ENCODE measurements at regions of chr7 and their contacts with region 1.

Region 1: DNA sequence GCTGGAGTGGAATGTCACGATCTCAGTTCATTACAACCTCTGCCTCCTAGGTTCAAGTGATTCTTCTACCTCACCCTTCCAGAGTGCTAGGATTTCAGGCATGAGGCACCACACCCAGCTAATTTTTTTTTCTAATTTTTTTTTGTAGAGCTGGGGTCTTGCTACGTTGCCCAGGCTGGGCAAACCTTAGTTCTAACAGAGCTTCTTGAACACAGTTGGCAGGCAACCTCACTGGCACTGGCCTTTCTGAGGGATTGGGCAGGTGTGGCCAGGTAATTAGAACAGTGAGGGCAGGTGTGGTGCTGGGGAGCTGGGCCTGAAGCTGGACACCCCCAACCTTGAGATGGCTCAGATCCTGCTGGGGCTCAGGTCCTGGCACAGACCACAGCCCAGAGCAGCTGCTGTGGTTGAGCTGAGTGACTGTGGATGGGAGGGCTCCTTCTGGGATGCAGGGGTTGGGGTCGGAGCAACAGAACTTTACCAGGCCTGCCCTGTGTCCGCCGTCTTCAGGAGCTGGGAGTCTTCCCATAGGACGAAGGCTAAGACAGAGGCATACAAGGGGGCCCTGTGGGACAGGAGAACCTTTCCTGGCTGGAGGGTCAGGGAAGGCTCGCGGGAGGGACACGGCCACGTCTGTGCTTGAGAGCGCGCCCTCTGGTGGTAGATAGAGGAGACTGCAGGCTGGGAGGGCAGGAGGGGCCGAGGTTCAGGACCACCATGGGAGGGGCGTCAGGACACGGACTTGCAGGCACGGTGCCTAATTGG is 48.2 kb downstream of the COL26A1 start:
- DNase-seq: peak; percentile 94
- H3K4me3 ChIP-seq: peak overlapping the region in 1 of 2 experiments; percentile 30; a peak in 1 of 4 replicates
- H3K27ac ChIP-seq: no peak overlapping the region
- H3K4me1 ChIP-seq: peaks cover 0 to 4% of the 10 kb centered on the region in 2 experiments; a peak in 1 of 4 replicates
- H3K27me3 ChIP-seq: peaks cover 10% of the 10 kb centered on the region; the same call in 1 of the 2 replicates
- CTCF ChIP-seq: peak; percentile 88
- EP300 ChIP-seq: no peak
- RAD21 ChIP-seq: peak; percentile 83

Region 2: GRCh38 chr7:101321491-101322401 is 89.2 kb before region 1 on chr7 and contains the start of gene IFT22:
- CTCF ChIA-PET with region 1: interaction called, 33 read pairs
- POLR2A ChIA-PET with region 1: interaction called, 11 read pairs
- DNase-seq: peak; percentile 99
- H3K4me3 ChIP-seq: peak within 1 kb of the TSS; percentile 61 to 78
- H3K27ac ChIP-seq: peak within 1 kb of the TSS; percentile 59 to 81
- H3K4me1 ChIP-seq: peaks cover 0 to 2% of the 10 kb centered on the region in 2 experiments; a peak in 2 of 4 replicates
- H3K27me3 ChIP-seq: no peaks in the 10 kb centered on the region
- CTCF ChIP-seq: peak; percentile 57
- EP300 ChIP-seq: no peak; a peak in 1 of 4 replicates
- RAD21 ChIP-seq: peak; percentile 72
- polyA plus RNA-seq, gene IFT22: 62.4 and 66.7 TPM in 2 replicates

Region 3: GRCh38 chr7:101363734-101364374 is 47.1 kb before region 1 on chr7:
- CTCF ChIA-PET with region 1: interaction called, 95 read pairs
- POLR2A ChIA-PET with region 1: interaction called, 3 read pairs
- DNase-seq: peak; percentile 98
- H3K4me3 ChIP-seq: peak overlapping the region; percentile 56 to 70
- H3K27ac ChIP-seq: peak overlapping the region in 1 of 2 experiments; percentile 9; a peak in 1 of 4 replicates
- H3K4me1 ChIP-seq: peaks cover 0 to 4% of the 10 kb centered on the region in 2 experiments; a peak in 1 of 4 replicates
- H3K27me3 ChIP-seq: peaks cover 11% of the 10 kb centered on the region
- CTCF ChIP-seq: peak; percentile 98
- EP300 ChIP-seq: no peak
- RAD21 ChIP-seq: peak; percentile 91

Region 4: GRCh38 chr7:101390901-101391301 is 20.0 kb before region 1 on chr7:
- CTCF ChIA-PET with region 1: interaction called, 71 read pairs
- POLR2A ChIA-PET with region 1: no interaction called
- DNase-seq: peak; percentile 87
- H3K4me3 ChIP-seq: no peak overlapping the region
- H3K27ac ChIP-seq: peak overlapping the region in 1 of 2 experiments; percentile 4; a peak in 1 of 4 replicates
- H3K4me1 ChIP-seq: peaks cover 0 to 14% of the 10 kb centered on the region in 2 experiments; a peak in 1 of 4 replicates
- H3K27me3 ChIP-seq: peaks cover 16% of the 10 kb centered on the region
- CTCF ChIP-seq: no peak
- EP300 ChIP-seq: peak in 1 of 2 experiments; percentile 80; a peak in 2 of 4 replicates
- RAD21 ChIP-seq: peak; percentile 9; the same call in 1 of the 2 replicates

Region 5: DNA sequence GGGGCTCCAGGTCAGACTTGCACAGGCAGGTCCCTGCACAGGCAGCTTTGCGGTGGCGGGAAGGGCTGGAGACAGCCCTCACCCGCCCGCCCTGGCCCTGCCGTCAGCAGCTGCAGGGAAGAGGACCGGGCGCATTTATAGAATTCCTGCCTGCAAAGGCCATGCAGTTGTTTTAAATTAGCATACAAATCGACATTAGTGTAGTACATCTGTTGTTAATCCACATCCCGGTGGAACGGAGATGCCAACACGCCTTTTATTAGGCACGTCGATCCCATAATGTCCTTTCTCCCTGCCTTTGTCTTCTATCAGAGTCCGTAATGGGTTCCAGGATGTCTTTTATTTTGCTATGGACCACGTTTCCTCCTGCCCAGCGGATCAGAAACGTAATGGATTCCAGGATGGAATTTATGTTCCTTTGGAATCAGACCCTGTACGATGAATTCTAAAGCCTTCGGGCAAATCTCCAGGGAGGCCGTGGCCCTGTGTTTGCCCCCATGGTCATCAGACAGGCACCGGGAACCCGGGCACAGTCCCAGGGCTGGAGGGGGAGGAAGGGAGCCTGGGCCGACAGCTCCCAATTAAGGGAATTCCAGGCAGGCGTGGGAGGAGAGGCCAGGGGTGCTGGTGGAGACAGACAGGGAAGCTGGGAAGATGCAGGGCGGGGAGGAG is 75.6 kb after region 1 on chr7:
- CTCF ChIA-PET with region 1: interaction called, 14 read pairs
- POLR2A ChIA-PET with region 1: no interaction called
- DNase-seq: peak; percentile 83
- H3K4me3 ChIP-seq: no peak overlapping the region
- H3K27ac ChIP-seq: peak overlapping the region in 1 of 2 experiments; percentile 77; a peak in 2 of 4 replicates
- H3K4me1 ChIP-seq: peaks cover 3 to 28% of the 10 kb centered on the region in 2 experiments; a peak in 1 of 4 replicates
- H3K27me3 ChIP-seq: no peaks in the 10 kb centered on the region
- CTCF ChIP-seq: no peak
- EP300 ChIP-seq: no peak
- RAD21 ChIP-seq: no peak

Measured in SK-N-SH (cell line).